Esophagus muscularis mucosa (tissue), 4 donors: ENCODE measurements at regions of chr17 and their contacts with region 1.

Region 1: DNA sequence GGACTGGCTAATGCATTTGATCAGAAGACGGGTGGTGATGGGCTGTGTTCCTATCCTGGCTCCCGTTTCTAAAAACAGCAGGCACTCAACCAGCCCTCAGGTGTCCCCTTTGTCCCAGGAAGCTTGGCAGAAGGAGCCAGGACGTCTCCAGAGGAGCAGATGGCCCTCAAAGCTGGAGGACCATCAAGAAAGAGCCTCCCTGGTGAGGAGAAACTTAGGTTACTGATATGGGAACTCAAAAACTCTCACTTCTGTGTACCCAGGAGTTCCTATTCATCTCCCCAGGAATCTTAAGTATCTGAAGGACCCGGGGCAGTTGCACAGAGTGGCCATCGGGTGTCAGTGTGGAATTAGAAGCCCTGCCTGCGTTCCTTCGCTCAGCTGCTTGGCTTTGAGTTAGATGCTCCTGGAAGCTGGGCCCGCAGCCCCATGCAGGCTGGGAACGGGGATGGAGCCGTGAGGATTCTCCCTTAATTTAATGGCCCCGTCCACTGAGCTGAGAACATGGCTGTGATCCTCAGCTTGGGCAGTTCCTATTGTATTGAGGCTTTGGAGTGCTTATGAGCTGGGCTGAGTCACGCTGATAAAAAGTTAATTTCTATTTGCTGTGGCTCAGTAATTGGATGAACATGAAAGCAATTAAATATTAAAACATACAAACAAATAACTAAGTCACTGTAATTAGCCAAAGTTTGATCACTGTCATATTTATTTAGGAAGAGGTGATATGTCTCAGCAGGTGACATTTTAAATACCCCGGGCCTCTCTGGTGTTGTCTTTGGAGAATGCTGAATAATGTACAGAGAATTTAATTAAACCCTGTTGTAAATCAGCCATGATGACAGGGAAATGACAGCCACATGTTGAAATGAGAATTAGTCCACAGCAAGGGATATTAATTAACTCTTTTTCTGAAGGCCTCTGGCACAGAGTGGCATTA is 402.1 kb downstream of the SEC14L1 start:
- DNase-seq: no peak
- H3K4me3 ChIP-seq: no peak overlapping the region
- H3K27ac ChIP-seq: no peak overlapping the region
- H3K4me1 ChIP-seq: peaks cover 16 to 27% (median 24%) of the 10 kb centered on the region in 4 donors
- H3K27me3 ChIP-seq: peaks cover 0 to 12% (median 0%) of the 10 kb centered on the region in 4 donors
- CTCF ChIP-seq: peak; percentile 91 to 98 (median 97)
- EP300 ChIP-seq: no peak
- POLR2A ChIP-seq: no peak

Region 2: GRCh38 chr17:77734341-77735080 is 191.7 kb after region 1 on chr17:
- intact Hi-C with region 1: loop called (anchors 2 kb)
- DNase-seq: peak; percentile 97
- H3K4me3 ChIP-seq: peak overlapping the region; percentile 30 to 40 (median 36)
- H3K27ac ChIP-seq: peak overlapping the region; percentile 82 to 90 (median 88)
- H3K4me1 ChIP-seq: peaks cover 44 to 58% (median 56%) of the 10 kb centered on the region in 4 donors
- H3K27me3 ChIP-seq: no peaks in the 10 kb centered on the region
- CTCF ChIP-seq: peak; percentile 33 to 45 (median 40)
- EP300 ChIP-seq: no peak
- POLR2A ChIP-seq: no peak

Region 3: GRCh38 chr17:78013683-78014467 is 471.1 kb after region 1 on chr17:
- intact Hi-C with region 1: loop called (anchors 5 kb)
- DNase-seq: no peak
- H3K4me3 ChIP-seq: no peak overlapping the region
- H3K27ac ChIP-seq: peak overlapping the region in 1 of 4 donors; percentile 27
- H3K4me1 ChIP-seq: peaks cover 6 to 14% (median 13%) of the 10 kb centered on the region in 4 donors
- H3K27me3 ChIP-seq: no peaks in the 10 kb centered on the region
- CTCF ChIP-seq: peak; percentile 81 to 86 (median 85)
- EP300 ChIP-seq: no peak
- POLR2A ChIP-seq: no peak